Activated CD4-positive, alpha-beta memory T cell treated with anti-CD3 and anti-CD28 coated beads for 36 hours (primary cell): ENCODE measurements at regions of chr7 and their contacts with region 1.

Region 1: DNA sequence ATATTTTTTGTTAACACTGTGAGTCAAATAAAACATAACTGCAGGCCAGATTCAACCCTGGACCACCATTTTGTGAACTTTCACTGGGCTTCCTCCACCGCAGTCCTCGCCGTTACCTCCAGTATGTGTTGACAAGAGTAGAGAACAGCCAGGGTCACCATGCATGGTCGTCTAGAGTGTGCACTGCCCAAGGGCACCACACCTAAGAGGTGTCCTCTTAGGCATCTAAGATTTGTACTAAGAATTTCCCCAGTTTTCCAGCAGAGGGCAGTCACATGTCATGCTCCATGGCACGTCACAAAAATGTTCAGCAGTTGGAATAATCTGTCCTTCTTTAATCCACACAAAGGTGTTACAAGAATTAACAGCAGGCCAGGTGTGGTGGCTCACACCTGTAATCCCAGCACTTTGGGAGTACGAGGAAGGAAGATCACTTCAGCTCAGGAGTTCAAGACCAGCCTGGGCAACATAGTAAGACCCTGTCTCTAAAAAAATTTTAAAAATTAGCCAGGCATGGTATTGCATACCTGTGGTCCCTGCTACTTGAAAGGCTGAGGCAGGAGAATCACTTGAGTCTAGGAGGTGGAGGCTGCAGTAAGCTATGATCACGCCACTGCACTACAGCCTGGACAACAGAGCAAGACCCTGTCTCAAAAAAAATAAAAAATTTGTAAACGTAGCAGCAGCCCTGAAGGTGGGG is 71.2 kb upstream of the FOXK1 start:
- DNase-seq: peak; percentile 56
- H3K4me3 Mint-ChIP-seq: no peak overlapping the region
- H3K27ac Mint-ChIP-seq: no peak overlapping the region
- H3K4me1 Mint-ChIP-seq: peaks cover 9% of the 10 kb centered on the region
- H3K27me3 Mint-ChIP-seq: no peaks in the 10 kb centered on the region

Region 2: GRCh38 chr7:3561932-3562331 is 1049.0 kb before region 1 on chr7:
- CTCF ChIA-PET with region 1: no interaction called
- POLR2A ChIA-PET with region 1: no interaction called
- intact Hi-C with region 1: no loop called
- DNase-seq: no peak
- H3K4me3 Mint-ChIP-seq: no peak overlapping the region
- H3K27ac Mint-ChIP-seq: no peak overlapping the region
- H3K4me1 Mint-ChIP-seq: peaks cover 2% of the 10 kb centered on the region
- H3K27me3 Mint-ChIP-seq: no peaks in the 10 kb centered on the region

Region 3: GRCh38 chr7:4631664-4632171 is 20.8 kb after region 1 on chr7:
- CTCF ChIA-PET with region 1: interaction called, 3 read pairs
- POLR2A ChIA-PET with region 1: no interaction called
- intact Hi-C with region 1: loop called (anchors 2 kb)
- DNase-seq: no peak
- H3K4me3 Mint-ChIP-seq: no peak overlapping the region
- H3K27ac Mint-ChIP-seq: no peak overlapping the region
- H3K4me1 Mint-ChIP-seq: no peaks in the 10 kb centered on the region
- H3K27me3 Mint-ChIP-seq: no peaks in the 10 kb centered on the region

Region 4: DNA sequence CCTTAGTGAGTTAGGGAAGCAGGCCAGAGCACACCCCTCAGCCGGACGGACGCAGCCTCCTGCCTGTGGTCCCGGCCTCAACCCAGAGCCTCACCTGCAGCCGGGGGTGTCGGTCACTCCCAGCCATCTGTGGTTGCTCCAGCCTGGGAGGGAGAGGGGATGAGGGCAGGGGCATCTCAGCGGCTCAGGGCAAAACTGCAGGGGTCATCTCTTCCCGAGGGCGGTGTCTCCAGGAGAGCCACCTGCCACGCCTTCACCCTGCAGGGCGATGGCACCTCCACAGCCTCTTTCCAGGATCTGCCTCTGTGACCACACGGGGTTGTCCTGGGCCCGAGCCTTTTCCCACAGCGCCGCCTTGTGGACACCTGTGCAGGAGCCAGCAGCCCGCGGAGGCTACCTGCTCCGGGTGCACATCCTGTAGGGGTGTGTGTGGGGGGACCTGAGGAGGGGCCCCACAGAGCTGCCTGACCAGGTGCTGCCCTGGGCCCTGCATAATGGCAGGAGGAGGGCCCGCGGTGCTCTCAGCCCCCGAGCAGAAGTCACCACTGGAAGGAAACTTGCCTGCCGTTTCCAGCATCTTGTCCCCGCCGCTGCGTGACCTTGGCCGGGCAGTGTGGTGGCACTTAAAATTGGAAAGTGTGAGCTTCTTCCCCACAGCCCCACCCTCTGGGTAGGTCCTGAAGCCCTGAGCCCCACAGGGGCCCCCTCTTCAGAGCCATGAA is 143.0 kb after region 1 on chr7:
- CTCF ChIA-PET with region 1: interaction called, 13 read pairs
- POLR2A ChIA-PET with region 1: no interaction called
- intact Hi-C with region 1: loop called (anchors 1 kb)
- DNase-seq: peak; percentile 90
- H3K4me3 Mint-ChIP-seq: no peak overlapping the region
- H3K27ac Mint-ChIP-seq: no peak overlapping the region
- H3K4me1 Mint-ChIP-seq: peaks cover 21% of the 10 kb centered on the region
- H3K27me3 Mint-ChIP-seq: no peaks in the 10 kb centered on the region

Region 5: DNA sequence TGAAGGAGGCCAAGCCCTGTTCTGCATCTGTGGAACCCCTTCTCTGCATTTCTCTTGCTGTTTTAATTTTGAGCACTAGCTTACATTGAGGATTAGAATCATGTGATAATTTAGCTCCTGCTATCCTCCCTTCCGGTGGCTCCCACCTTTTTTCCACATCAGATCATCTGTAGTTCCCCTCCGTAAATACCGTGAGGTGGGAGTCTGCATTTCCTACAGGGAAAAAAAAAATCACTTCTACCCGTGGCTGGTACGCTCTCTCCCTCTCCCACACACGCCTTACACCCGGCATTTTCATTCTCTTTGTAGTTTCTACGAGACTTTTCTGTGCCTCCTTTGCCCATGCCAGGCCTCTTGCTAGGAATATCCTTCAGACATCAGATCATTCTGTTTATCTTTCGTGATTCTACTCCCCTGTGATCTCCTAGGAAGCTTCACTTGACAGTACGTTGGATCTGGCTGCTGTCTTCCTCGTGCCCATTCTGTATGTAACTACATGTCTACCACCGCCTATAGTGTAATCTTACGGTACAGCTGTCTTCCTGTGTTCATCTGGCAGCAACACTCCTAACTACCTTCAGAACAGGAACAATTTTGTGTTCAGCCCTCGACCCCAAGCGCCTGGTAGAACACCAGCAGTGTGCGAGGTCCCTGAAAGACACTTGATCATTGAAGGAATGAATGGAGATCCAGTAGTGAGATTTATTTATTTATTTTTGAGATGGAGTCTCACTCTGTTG is 1228.0 kb after region 1 on chr7:
- CTCF ChIA-PET with region 1: no interaction called
- POLR2A ChIA-PET with region 1: no interaction called
- intact Hi-C with region 1: no loop called
- DNase-seq: no peak
- H3K4me3 Mint-ChIP-seq: peak overlapping the region; percentile 11
- H3K27ac Mint-ChIP-seq: peak overlapping the region; percentile 21
- H3K4me1 Mint-ChIP-seq: peaks cover 30% of the 10 kb centered on the region
- H3K27me3 Mint-ChIP-seq: no peaks in the 10 kb centered on the region